Ascending aorta (tissue), 2 donors: ENCODE measurements at regions of chr9 and their contacts with region 1.

Region 1: DNA sequence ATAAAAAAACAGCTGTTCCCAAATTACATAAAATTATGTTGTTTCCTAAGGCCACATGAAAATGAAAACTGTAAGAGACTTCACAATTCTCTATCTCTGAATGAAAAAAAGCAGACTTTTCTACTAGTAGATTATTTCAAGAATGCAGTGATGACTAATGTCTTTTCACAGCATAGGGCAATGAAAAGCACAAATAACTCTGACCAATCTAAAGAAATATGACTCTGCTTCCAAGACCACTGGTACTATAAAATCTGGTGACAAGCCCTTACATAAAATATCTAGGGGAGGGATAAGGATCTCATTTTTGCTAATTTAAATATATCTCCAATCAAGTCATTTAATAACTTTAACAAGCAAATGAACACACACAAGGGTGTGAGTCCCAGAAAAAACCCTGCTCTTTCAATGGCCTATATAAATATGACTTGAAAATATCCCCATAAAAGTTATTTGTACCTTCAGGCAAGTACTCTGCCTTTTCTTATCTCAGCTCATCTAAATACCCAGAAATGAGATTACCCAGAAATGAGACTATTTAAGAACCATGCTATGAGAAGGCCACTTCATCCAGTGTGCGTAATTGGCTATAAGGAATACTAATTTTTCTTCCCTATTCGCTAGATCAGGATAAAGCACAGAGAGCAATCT is 105.2 kb downstream of the GNAQ start:
- DNase-seq: no peak
- H3K4me3 ChIP-seq: no peak overlapping the region
- H3K27ac ChIP-seq: peak overlapping the region; percentile 59 to 65
- H3K4me1 ChIP-seq: peaks cover 7 to 27% of the 10 kb centered on the region in 2 donors
- H3K27me3 ChIP-seq: no peaks in the 10 kb centered on the region
- CTCF ChIP-seq: no peak

Region 2: DNA sequence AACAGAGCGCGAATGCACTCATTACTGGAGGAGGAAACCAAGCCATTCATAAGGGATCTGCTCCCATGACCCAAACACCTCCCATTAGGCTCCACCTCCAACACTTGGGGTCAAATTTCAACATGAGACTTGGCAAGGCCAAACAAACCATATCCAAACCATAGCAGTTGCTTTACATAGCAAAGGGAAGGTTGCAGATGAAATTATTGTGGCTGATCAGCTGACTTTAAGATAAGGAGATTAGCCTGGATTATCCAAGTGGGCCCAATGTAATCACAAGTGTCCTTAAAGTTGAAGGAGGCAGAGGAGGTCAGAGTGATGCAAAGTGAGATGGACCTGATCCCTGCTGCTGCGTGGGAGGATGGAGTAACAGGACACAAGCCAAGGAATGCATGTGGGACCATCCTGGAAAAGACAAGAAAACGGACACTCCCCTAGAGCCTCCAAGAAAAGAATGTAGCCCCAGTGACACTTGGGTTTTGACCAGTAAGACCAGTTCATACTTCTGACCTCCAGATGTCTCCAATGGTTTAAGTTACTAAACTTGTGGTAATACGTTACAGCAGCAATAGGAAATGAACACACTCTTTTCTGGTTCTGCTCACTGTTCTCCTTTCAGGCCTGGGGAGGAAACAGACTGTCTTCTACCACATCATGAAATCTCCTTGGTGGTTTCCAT is 62.1 kb before region 1 on chr9:
- intact Hi-C with region 1: no loop called
- DNase-seq: no peak
- H3K4me3 ChIP-seq: no peak overlapping the region
- H3K27ac ChIP-seq: no peak overlapping the region
- H3K4me1 ChIP-seq: peaks cover 0 to 3% of the 10 kb centered on the region in 2 donors
- H3K27me3 ChIP-seq: no peaks in the 10 kb centered on the region
- CTCF ChIP-seq: no peak

Region 3: GRCh38 chr9:77885104-77885672 is 41.2 kb before region 1 on chr9:
- intact Hi-C with region 1: loop called (anchors 5 kb)
- DNase-seq: no peak
- H3K4me3 ChIP-seq: no peak overlapping the region
- H3K27ac ChIP-seq: peak overlapping the region; percentile 57 to 58
- H3K4me1 ChIP-seq: peaks cover 0 to 14% of the 10 kb centered on the region in 2 donors
- H3K27me3 ChIP-seq: no peaks in the 10 kb centered on the region
- CTCF ChIP-seq: no peak

Region 4: DNA sequence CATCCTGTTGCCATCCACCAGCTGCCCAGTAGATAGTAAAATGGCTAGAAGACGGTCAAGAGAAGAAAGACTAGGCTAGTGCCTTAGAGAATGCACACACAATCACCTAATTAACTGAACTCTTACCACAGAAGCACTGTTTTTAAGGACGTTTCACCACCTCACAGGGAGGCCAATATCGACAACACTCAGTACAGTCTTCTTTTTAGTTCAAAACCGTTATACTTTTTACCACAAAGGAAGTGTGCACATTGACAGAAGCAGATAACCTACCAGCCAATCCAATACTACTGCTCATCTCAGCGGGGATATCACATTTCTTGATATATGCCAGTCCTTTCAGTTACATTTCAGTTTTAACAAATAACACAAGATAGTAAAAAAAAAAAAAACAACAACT is 17.1 kb before region 1 on chr9:
- intact Hi-C with region 1: no loop called
- DNase-seq: no peak
- H3K4me3 ChIP-seq: no peak overlapping the region
- H3K27ac ChIP-seq: no peak overlapping the region
- H3K4me1 ChIP-seq: peaks cover 0 to 13% of the 10 kb centered on the region in 2 donors
- H3K27me3 ChIP-seq: no peaks in the 10 kb centered on the region
- CTCF ChIP-seq: no peak

Region 5: DNA sequence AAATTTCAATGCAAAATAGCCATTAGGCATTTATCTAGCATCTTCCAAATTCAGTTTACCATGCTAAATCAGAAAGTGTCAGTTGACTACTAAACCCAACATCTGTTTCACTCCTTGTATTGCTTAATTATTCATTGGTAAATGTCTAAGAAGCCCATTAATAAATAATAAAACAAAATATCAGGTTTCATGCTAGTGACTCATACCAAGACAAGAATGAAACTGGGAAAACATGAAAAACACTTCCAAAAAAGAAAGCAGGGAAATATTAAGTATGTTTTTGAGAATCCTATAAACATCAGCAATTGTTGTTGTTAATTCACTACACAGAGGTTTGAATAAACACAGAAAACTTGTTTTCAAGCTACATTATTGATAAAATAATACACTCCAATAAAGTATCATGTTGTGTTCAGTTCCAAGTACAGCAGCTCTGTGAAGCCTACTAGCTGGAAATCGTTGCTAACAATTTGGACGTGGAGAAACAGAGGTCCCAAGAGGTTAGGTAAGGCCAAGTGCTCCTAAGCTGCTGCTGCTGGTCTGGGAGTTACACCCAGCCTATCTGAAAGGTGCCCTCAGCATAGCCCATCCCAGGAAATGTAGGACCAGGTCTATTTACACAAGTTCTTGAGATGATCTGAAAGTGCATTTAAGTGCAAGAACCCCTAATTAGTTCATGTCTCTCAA is 26.4 kb after region 1 on chr9:
- intact Hi-C with region 1: no loop called
- DNase-seq: no peak
- H3K4me3 ChIP-seq: no peak overlapping the region
- H3K27ac ChIP-seq: peak overlapping the region in 1 of 2 donors; percentile 59
- H3K4me1 ChIP-seq: peaks cover 7 to 54% of the 10 kb centered on the region in 2 donors
- H3K27me3 ChIP-seq: no peaks in the 10 kb centered on the region
- CTCF ChIP-seq: no peak

Region 6: DNA sequence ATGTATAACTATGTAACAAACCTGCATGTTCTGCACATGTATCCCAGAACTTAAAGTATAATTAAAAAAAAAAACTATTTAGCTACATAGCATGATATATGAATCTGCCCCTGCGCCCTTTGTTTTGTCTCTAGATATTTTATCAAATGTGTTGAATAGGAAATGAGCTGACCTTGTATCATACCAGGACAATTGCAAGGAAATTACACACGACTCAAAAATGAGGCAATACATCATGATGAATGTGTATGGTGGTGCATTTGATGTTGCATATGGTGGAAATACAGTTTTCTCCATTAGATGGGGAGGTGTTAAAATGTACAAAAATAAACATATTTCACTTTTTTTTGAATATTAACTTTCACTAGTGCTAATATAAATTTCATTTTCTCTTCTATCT is 280.9 kb after region 1 on chr9:
- intact Hi-C with region 1: no loop called
- DNase-seq: no peak
- H3K4me3 ChIP-seq: no peak overlapping the region
- H3K27ac ChIP-seq: no peak overlapping the region
- H3K4me1 ChIP-seq: no peaks in the 10 kb centered on the region
- H3K27me3 ChIP-seq: no peaks in the 10 kb centered on the region
- CTCF ChIP-seq: no peak